ENCODE measurements at regions of chr3 and their contacts with region 1.

Region 1: GRCh38 chr3:4866841-4867240 is 112.4 kb upstream of the BHLHE40 start:
- DNase-seq: peak in 2 of 9 experiments; percentile 47 to 61
- ATAC-seq: no peak
- H3K4me3 ChIP-seq: no peak overlapping the region
- H3K4me3 Mint-ChIP-seq: peak overlapping the region; percentile 84
- H3K27ac ChIP-seq: peak overlapping the region; percentile 67 to 83
- H3K27ac Mint-ChIP-seq: peak overlapping the region; percentile 94
- H3K4me1 ChIP-seq: peaks cover 25% of the 10 kb centered on the region
- H3K4me1 Mint-ChIP-seq: peaks cover 34% of the 10 kb centered on the region
- H3K27me3 ChIP-seq: no peaks in the 10 kb centered on the region
- H3K27me3 Mint-ChIP-seq: no peaks in the 10 kb centered on the region
- CTCF ChIP-seq: no peak

Region 2: DNA sequence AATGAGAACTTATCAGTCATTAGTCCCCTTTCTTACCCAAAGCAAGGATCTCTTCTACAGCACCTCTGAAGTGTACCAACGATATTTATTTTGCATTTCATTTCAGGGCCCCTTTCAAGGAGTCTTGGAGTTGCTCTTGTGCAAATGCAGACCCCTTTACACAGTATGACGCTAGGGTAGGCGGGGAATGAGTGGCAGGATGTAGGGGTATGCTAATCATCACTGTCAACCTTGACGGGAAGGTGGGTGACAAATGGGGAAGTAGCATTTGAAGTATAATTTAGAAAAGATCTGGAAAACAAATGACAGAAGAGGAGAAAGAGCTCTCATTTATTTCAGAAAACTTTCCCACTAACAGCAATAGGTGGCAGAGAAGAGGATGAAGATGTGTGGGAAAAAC is 973.3 kb before region 1 on chr3:
- CTCF ChIA-PET with region 1: no interaction called
- POLR2A ChIA-PET with region 1: no interaction called
- intact Hi-C with region 1: no loop called
- DNase-seq: no peak
- ATAC-seq: no peak
- H3K4me3 ChIP-seq: no peak overlapping the region
- H3K4me3 Mint-ChIP-seq: no peak overlapping the region
- H3K27ac ChIP-seq: no peak overlapping the region
- H3K27ac Mint-ChIP-seq: no peak overlapping the region
- H3K4me1 ChIP-seq: no peaks in the 10 kb centered on the region
- H3K4me1 Mint-ChIP-seq: no peaks in the 10 kb centered on the region
- H3K27me3 ChIP-seq: no peaks in the 10 kb centered on the region
- H3K27me3 Mint-ChIP-seq: no peaks in the 10 kb centered on the region
- CTCF ChIP-seq: no peak

Region 3: GRCh38 chr3:4512895-4513616 is 353.8 kb before region 1 on chr3:
- CTCF ChIA-PET with region 1: no interaction called
- POLR2A ChIA-PET with region 1: no interaction called
- intact Hi-C with region 1: loop called in 1 of 2 experiments (anchors 1 kb)
- DNase-seq: peak in 1 of 9 experiments; percentile 27
- ATAC-seq: peak; percentile 62
- H3K4me3 ChIP-seq: no peak overlapping the region
- H3K4me3 Mint-ChIP-seq: no peak overlapping the region
- H3K27ac ChIP-seq: no peak overlapping the region
- H3K27ac Mint-ChIP-seq: peak overlapping the region; percentile 14
- H3K4me1 ChIP-seq: peaks cover 24% of the 10 kb centered on the region
- H3K4me1 Mint-ChIP-seq: peaks cover 56% of the 10 kb centered on the region
- H3K27me3 ChIP-seq: no peaks in the 10 kb centered on the region
- H3K27me3 Mint-ChIP-seq: no peaks in the 10 kb centered on the region
- CTCF ChIP-seq: no peak

Region 4: GRCh38 chr3:4722103-4722502 is 144.7 kb before region 1 on chr3:
- CTCF ChIA-PET with region 1: no interaction called
- POLR2A ChIA-PET with region 1: no interaction called
- intact Hi-C with region 1: loop called in 1 of 2 experiments (anchors 5 kb)
- DNase-seq: peak in 2 of 9 experiments; percentile 38 to 52
- ATAC-seq: no peak
- H3K4me3 ChIP-seq: no peak overlapping the region
- H3K4me3 Mint-ChIP-seq: no peak overlapping the region
- H3K27ac ChIP-seq: no peak overlapping the region
- H3K27ac Mint-ChIP-seq: no peak overlapping the region
- H3K4me1 ChIP-seq: no peaks in the 10 kb centered on the region
- H3K4me1 Mint-ChIP-seq: no peaks in the 10 kb centered on the region
- H3K27me3 ChIP-seq: no peaks in the 10 kb centered on the region
- H3K27me3 Mint-ChIP-seq: no peaks in the 10 kb centered on the region
- CTCF ChIP-seq: no peak

Region 5: GRCh38 chr3:4845882-4846281 is 21.0 kb before region 1 on chr3:
- CTCF ChIA-PET with region 1: no interaction called
- POLR2A ChIA-PET with region 1: no interaction called
- intact Hi-C with region 1: loop called in 1 of 2 experiments (anchors 1 kb)
- DNase-seq: peak in 2 of 9 experiments; percentile 74 to 87
- ATAC-seq: peak; percentile 77
- H3K4me3 ChIP-seq: no peak overlapping the region
- H3K4me3 Mint-ChIP-seq: peak overlapping the region; percentile 38
- H3K27ac ChIP-seq: no peak overlapping the region
- H3K27ac Mint-ChIP-seq: peak overlapping the region; percentile 79
- H3K4me1 ChIP-seq: peaks cover 94% of the 10 kb centered on the region
- H3K4me1 Mint-ChIP-seq: peaks cover 87% of the 10 kb centered on the region
- H3K27me3 ChIP-seq: no peaks in the 10 kb centered on the region
- H3K27me3 Mint-ChIP-seq: no peaks in the 10 kb centered on the region
- CTCF ChIP-seq: no peak

Region 6: GRCh38 chr3:5294356-5294755 is 427.5 kb after region 1 on chr3:
- CTCF ChIA-PET with region 1: no interaction called
- POLR2A ChIA-PET with region 1: no interaction called
- intact Hi-C with region 1: no loop called
- DNase-seq: no peak
- ATAC-seq: no peak
- H3K4me3 ChIP-seq: no peak overlapping the region
- H3K4me3 Mint-ChIP-seq: no peak overlapping the region
- H3K27ac ChIP-seq: no peak overlapping the region
- H3K27ac Mint-ChIP-seq: no peak overlapping the region
- H3K4me1 ChIP-seq: no peaks in the 10 kb centered on the region
- H3K4me1 Mint-ChIP-seq: peaks cover 3% of the 10 kb centered on the region
- H3K27me3 ChIP-seq: no peaks in the 10 kb centered on the region
- H3K27me3 Mint-ChIP-seq: peaks cover 4% of the 10 kb centered on the region
- CTCF ChIP-seq: no peak

Measured in CD8-positive, alpha-beta T cell (primary cell).